ENCODE measurements at regions of chr9 and their contacts with region 1.

Region 1: DNA sequence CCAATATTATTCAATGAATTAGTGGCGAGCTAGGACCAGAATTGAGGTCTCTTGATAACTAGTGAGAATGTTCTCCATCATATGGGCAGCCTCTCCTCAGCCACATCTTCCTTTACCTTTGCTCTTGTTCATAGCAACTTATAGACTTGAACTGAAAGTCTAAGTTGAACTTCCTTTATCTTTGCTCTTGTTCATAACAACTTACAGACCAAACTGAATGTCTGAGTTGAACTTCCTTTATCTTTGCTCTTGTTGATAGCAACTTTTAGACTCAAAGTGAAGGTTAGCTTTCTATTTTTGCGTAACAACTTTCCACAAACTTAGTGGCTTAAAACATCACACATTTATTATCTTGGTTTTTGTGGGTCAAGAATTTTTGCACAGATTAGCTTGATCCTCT is 146.4 kb upstream of the C9orf72 start:
- DNase-seq: no peak
- ATAC-seq: no peak
- H3K4me3 ChIP-seq: no peak overlapping the region
- H3K27ac ChIP-seq: no peak overlapping the region
- H3K4me1 ChIP-seq: no peaks in the 10 kb centered on the region
- CTCF ChIP-seq: no peak
- EP300 ChIP-seq: no peak
- POLR2A ChIP-seq: no peak
- RAD21 ChIP-seq: no peak

Region 2: DNA sequence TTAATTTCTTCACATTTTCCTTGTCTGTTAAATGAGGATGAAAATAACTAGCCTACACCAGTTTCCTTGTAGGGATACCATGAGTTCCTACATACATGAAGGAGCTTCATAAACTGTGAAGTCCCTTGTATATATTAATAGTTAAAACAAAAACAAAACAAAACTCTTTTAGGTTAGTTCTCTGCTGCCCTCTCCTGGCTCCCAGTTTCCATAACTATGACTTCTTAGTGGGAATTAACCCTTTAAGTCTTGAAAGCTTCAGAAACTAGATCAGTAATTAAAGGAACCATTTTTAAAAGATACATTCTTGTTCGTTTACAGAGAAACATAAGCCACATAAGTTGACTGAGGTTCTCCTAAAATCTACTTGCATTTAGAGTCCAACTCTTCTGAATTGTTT is 353.6 kb after region 1 on chr9:
- CTCF ChIA-PET with region 1: interaction called, 30 read pairs
- POLR2A ChIA-PET with region 1: no interaction called
- DNase-seq: peak; percentile 3 to 49
- ATAC-seq: 0 out of 6 replicates have a peak, but pooled peaks of 1 of the 2 experiments have one; percentile 41
- H3K4me3 ChIP-seq: no peak overlapping the region
- H3K27ac ChIP-seq: no peak overlapping the region
- H3K4me1 ChIP-seq: no peaks in the 10 kb centered on the region
- CTCF ChIP-seq: peak; percentile 48
- EP300 ChIP-seq: no peak
- POLR2A ChIP-seq: no peak
- RAD21 ChIP-seq: peak; percentile 54 to 57; a peak in 4 of 5 replicates

Measured in A549 (cell line).